Activated CD8-positive, alpha-beta T cell treated with anti-CD3 and anti-CD28 coated beads for 36 hours (primary cell): ENCODE measurements at regions of chr9 and their contacts with region 1.

Region 1: DNA sequence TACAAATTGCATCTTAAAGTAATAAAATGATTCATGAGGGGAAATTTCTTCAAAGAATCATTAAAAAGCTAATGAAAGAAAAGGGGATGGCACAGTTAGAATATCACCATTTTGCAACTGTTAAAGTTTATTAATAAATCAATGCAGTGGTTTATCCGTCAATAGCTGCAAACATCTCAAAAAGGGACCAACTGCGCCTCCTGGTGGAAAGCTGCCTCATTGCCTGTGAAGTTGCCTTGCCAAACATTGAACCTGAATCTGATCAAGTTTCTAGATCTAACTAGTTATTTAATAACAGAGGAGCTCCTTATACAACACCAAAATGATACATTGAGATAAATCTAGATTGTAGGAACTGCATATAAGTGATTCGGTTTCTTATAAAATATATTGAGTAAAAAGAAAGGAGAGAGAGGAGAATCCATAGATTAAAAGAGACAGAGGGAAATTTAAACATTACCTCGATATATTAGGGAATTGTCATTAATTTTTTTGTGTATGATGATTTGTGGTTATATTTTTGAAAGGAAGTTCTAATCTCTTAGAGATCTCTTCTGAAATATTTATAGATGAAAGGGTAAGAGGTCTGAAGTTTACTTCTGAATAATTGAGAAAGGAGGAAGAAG is 6.9 kb upstream of the NDUFB6 start:
- DNase-seq: peak; percentile 87
- ATAC-seq: peak; percentile 61
- H3K4me3 Mint-ChIP-seq: no peak overlapping the region
- H3K27ac Mint-ChIP-seq: no peak overlapping the region
- H3K4me1 Mint-ChIP-seq: no peaks in the 10 kb centered on the region
- H3K27me3 Mint-ChIP-seq: peaks cover 9% of the 10 kb centered on the region
- CTCF ChIP-seq: peak; percentile 94

Region 2: DNA sequence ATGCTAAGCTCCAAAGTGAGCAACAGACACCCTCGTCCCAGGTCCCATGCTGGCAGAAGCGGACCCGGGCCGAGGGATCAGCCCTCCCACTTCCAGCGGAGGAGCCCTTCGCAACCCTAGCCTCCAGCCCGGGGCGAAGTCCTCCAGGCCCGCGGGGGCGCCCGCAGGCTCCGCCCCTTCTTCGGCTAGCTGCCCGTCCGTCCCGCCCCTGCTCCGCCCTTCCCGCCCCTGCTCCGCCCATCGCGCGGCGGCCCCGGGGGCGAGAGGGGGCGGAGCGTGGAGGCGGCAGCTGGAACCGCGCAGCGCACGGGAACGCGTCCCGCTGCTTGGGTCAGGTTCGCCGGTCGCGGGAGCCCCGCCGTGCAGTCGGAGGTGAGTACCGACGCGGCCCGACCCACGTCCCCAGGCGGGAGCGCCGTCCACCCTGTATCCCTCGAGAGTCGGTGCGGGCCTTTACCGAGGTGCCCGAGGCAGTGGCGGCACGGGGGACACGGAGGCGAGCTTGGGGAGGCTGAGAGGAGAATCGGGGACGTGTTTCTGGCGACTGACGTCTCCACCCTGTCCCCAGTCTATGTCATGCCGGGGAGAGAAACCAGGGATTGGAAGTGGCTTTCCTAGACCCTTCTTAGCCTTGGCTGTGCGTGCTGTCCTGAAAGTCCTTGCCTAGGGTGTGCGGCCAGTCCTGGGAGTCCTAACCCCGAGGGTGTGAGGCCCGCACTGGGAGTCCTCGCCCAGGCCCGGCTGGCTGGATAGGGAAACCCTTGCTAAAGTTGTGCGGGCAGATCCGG is 195.3 kb before region 1 on chr9 and contains the start of gene ACO1:
- CTCF ChIA-PET with region 1: interaction called, 477 read pairs
- POLR2A ChIA-PET with region 1: interaction called, 10 read pairs
- intact Hi-C with region 1: loop called (anchors 1 kb)
- DNase-seq: peak; percentile 83
- ATAC-seq: peak; percentile 97
- H3K4me3 Mint-ChIP-seq: peak within 1 kb of the TSS; percentile 81
- H3K27ac Mint-ChIP-seq: no peak within 1 kb of the TSS
- H3K4me1 Mint-ChIP-seq: peaks cover 17% of the 10 kb centered on the region
- H3K27me3 Mint-ChIP-seq: peaks cover 12% of the 10 kb centered on the region
- CTCF ChIP-seq: no peak
- total RNA-seq, gene ACO1: 15.3 to 15.7 TPM

Region 3: DNA sequence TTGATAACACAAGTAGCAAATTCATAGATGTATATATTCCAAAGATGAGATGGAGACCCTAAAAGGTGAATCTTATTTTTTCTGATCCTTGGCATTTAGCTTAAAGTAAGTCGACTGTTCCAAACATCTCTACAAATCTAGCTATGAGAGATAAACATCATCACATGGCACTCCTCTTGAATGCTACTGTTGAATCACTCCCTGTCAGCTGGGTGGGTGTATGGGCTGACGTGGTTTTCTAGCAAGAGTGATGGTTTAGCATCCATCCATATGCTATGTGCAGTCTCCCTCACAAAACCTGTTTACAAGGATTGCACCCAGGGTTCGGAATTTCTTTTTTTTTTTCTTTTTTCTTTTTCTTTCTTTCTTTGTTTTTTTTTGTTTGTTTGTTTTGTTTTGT is 181.6 kb before region 1 on chr9:
- CTCF ChIA-PET with region 1: interaction called, 23 read pairs
- POLR2A ChIA-PET with region 1: no interaction called
- intact Hi-C with region 1: no loop called
- DNase-seq: no peak
- ATAC-seq: no peak
- H3K4me3 Mint-ChIP-seq: no peak overlapping the region
- H3K27ac Mint-ChIP-seq: no peak overlapping the region
- H3K4me1 Mint-ChIP-seq: no peaks in the 10 kb centered on the region
- H3K27me3 Mint-ChIP-seq: no peaks in the 10 kb centered on the region
- CTCF ChIP-seq: no peak

Region 4: GRCh38 chr9:32526041-32526706 is 53.6 kb before region 1 on chr9 and contains the start of gene RIGI:
- CTCF ChIA-PET with region 1: interaction called, 15 read pairs
- POLR2A ChIA-PET with region 1: no interaction called
- intact Hi-C with region 1: loop called (anchors 10 kb)
- DNase-seq: peak; percentile 81
- ATAC-seq: peak; percentile 75
- H3K4me3 Mint-ChIP-seq: peak within 1 kb of the TSS; percentile 85
- H3K27ac Mint-ChIP-seq: peak within 1 kb of the TSS; percentile 85
- H3K4me1 Mint-ChIP-seq: peaks cover 49% of the 10 kb centered on the region
- H3K27me3 Mint-ChIP-seq: no peaks in the 10 kb centered on the region
- CTCF ChIP-seq: peak; percentile 59
- total RNA-seq, gene RIGI: 5.4 to 5.6 TPM

Region 5: GRCh38 chr9:32550562-32551433 is 29.0 kb before region 1 on chr9:
- CTCF ChIA-PET with region 1: interaction called, 12 read pairs
- POLR2A ChIA-PET with region 1: no interaction called
- intact Hi-C with region 1: no loop called
- DNase-seq: peak; percentile 95
- ATAC-seq: peak; percentile 72
- H3K4me3 Mint-ChIP-seq: peak overlapping the region; percentile 86
- H3K27ac Mint-ChIP-seq: peak overlapping the region; percentile 100
- H3K4me1 Mint-ChIP-seq: peaks cover 50% of the 10 kb centered on the region
- H3K27me3 Mint-ChIP-seq: no peaks in the 10 kb centered on the region
- CTCF ChIP-seq: no peak

Region 6: DNA sequence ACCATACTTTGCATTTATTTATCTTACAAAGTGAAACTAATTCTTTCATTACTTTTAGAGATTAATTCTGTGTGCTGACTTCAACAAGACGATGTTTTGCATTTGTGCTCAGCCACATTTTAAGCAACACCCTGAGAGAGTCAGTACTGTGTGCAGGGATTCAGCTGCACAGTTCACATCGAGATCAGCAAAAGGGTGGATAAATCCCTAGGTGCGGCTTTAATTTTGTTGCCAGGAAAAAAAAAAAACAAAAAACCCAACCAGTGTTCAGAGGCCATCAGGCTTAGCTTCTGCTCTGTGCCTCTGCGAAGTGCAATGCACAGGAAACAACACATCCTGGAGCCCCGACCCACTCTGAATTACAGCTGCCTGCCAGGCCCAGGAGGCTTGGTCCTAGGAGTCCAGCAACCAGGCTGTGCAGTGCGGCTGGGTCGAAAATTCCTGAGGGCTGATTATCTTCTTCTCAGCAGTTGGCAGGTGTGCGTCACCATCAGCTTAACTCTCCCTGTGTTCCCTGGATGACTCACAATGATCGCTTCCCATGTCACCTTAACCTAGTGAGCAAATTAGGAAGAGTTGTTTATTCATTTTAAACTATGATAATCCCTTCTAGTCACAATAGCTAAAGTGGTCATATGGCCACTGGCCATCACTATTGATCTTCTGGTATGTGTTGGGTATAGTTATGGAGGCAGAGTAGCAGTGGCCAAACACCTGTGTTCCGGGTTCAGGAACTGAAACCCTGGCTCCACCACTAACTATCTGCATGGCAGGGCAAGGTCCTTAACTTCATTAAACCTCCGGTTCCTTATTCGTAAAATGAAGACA is 24.3 kb after region 1 on chr9:
- CTCF ChIA-PET with region 1: interaction called, 10 read pairs
- POLR2A ChIA-PET with region 1: no interaction called
- intact Hi-C with region 1: no loop called
- DNase-seq: no peak
- ATAC-seq: no peak
- H3K4me3 Mint-ChIP-seq: no peak overlapping the region
- H3K27ac Mint-ChIP-seq: no peak overlapping the region
- H3K4me1 Mint-ChIP-seq: no peaks in the 10 kb centered on the region
- H3K27me3 Mint-ChIP-seq: peaks cover 9% of the 10 kb centered on the region
- CTCF ChIP-seq: no peak

Region 7: GRCh38 chr9:32725066-32725860 is 145.4 kb after region 1 on chr9:
- CTCF ChIA-PET with region 1: no interaction called
- POLR2A ChIA-PET with region 1: no interaction called
- intact Hi-C with region 1: no loop called
- DNase-seq: no peak
- ATAC-seq: no peak
- H3K4me3 Mint-ChIP-seq: no peak overlapping the region
- H3K27ac Mint-ChIP-seq: no peak overlapping the region
- H3K4me1 Mint-ChIP-seq: no peaks in the 10 kb centered on the region
- H3K27me3 Mint-ChIP-seq: peaks cover 3% of the 10 kb centered on the region
- CTCF ChIP-seq: no peak

Region 8: GRCh38 chr9:32968101-32969011 is 388.5 kb after region 1 on chr9:
- CTCF ChIA-PET with region 1: interaction called, 65 read pairs
- POLR2A ChIA-PET with region 1: no interaction called
- intact Hi-C with region 1: loop called (anchors 2 kb)
- DNase-seq: peak; percentile 75
- ATAC-seq: no peak
- H3K4me3 Mint-ChIP-seq: no peak overlapping the region
- H3K27ac Mint-ChIP-seq: no peak overlapping the region
- H3K4me1 Mint-ChIP-seq: peaks cover 1% of the 10 kb centered on the region
- H3K27me3 Mint-ChIP-seq: no peaks in the 10 kb centered on the region
- CTCF ChIP-seq: peak; percentile 84